Mammary epithelial cell (primary cell): ENCODE measurements at regions of chr4 and their contacts with region 1.

Region 1: DNA sequence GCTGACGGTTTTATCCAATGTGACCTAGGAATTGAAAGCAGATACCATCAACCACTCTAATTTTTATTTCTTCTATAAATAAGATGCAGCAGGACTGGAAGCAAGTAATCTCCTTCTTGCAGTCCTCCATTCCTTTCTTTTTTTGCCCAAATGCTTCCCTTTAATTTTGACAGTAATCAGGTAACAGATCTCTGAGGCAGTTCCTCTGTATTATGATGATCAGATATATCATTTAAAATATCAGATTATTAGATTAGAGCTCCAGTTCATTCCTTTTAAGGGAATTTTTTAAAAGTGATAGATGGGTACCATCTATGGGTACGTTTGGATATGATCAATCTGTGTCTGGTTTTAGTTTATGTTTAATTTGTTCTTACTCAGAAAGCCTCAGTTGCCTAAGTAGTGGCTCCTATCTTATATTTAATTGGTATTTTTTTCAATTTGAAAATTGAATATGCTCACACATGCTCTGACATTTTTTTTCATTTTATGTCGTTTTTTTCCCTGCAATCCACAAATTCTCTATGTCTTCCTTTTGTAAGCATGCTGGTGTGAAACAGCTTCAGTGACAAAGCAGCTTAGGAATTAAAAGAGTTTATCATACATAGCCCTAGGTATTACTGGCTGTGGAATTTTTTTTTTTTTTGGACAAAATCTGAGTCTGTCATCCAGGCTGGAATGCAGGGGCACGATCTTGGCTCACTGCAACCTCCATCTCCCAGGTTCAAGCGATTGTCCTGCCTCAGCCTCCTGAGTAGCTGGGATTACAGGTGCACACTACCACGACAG is 73.7 kb upstream of the ANK2 start:
- DNase-seq: no peak
- H3K4me3 ChIP-seq: no peak overlapping the region
- H3K27ac ChIP-seq: no peak overlapping the region
- H3K4me1 ChIP-seq: peaks cover 10% of the 10 kb centered on the region
- H3K27me3 ChIP-seq: no peaks in the 10 kb centered on the region
- CTCF ChIP-seq: no peak

Region 2: GRCh38 chr4:112951362-112952312 is 24.1 kb before region 1 on chr4:
- CTCF ChIA-PET with region 1: interaction called, 10 read pairs
- dilution Hi-C with region 1: no loop called
- in situ Hi-C with region 1: no loop called
- intact Hi-C with region 1: no loop called
- DNase-seq: no peak
- H3K4me3 ChIP-seq: no peak overlapping the region
- H3K27ac ChIP-seq: no peak overlapping the region
- H3K4me1 ChIP-seq: no peaks in the 10 kb centered on the region
- H3K27me3 ChIP-seq: peaks cover 2% of the 10 kb centered on the region
- CTCF ChIP-seq: peak; percentile 42 to 57

Region 3: DNA sequence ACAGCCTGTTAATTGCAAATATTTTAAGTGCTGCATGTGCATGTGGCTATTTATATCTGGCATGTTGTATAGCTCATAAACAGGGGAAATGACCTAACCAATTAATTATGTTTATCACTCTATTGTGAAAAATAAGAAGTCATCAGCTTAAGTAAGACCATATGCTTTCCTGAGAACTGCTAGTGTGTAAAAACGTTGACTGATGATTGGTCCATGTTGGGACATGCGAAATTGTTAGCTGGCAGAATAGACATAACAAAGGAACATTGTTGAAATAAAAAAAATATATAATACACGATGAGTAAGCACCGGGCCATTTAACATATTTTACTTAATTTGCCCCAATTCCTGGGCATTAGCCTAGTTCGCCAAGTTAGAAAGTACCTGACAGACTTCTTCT is 281.2 kb after region 1 on chr4:
- CTCF ChIA-PET with region 1: no interaction called
- dilution Hi-C with region 1: no loop called
- in situ Hi-C with region 1: no loop called
- intact Hi-C with region 1: no loop called
- DNase-seq: peak; percentile 70
- H3K4me3 ChIP-seq: no peak overlapping the region
- H3K27ac ChIP-seq: no peak overlapping the region
- H3K4me1 ChIP-seq: peaks cover 5% of the 10 kb centered on the region
- H3K27me3 ChIP-seq: no peaks in the 10 kb centered on the region
- CTCF ChIP-seq: no peak

Region 4: GRCh38 chr4:113300471-113300928 is 324.7 kb after region 1 on chr4:
- CTCF ChIA-PET with region 1: no interaction called
- dilution Hi-C with region 1: no loop called
- in situ Hi-C with region 1: no loop called
- intact Hi-C with region 1: no loop called
- DNase-seq: peak; percentile 92
- H3K4me3 ChIP-seq: no peak overlapping the region
- H3K27ac ChIP-seq: peak overlapping the region; percentile 92
- H3K4me1 ChIP-seq: peaks cover 7% of the 10 kb centered on the region
- H3K27me3 ChIP-seq: no peaks in the 10 kb centered on the region
- CTCF ChIP-seq: no peak